Sigmoid colon (tissue), 7 donors: ENCODE measurements at regions of chr2 and their contacts with region 1.

Region 1: DNA sequence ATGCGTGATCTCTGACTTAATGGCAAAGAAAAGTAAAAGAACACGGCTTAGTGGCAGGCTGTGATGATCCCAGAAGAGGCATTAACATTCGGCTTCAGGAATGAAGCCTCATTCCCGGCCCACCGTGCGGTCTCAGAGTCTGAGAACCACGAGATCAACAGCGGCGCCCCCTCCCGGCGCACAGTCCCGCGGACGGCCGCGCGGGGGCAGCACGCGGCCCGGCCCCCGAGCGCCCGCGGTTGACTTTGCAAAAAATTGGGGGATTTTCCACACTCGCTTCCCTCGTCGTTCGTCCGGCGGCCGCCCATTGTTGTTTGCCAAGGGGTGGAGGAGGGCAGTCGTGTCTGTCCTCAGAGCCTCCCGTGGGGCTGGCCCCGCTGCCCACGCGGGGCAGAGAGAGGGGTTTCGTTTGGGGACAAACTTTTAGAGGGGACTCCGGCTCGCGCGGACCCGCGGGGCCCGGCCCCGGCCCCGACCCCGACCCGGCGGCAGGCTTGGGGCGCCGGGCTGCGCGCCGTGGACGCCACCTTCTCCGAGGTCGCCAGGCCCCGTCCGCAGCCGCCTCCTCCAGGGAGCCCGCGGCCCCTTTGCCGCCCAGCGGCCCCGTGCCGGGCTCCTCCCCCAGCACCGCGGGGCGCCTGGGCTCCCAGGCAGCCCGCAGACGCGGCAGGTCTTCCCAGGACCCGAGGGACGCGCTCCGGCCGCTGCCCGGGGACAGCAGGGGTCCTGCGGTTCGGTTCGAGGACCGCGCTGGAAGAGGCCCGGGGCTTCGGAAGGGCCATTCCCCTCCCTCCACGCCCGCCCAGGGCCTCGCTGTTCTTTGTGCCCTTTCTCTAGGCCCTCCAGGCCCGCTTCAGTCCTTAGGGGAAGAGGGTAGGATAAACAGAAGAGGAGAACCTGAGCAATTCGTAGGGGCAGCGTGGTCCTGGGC is 3.4 kb upstream of the HS6ST1 start:
- DNase-seq: peak; percentile 93
- H3K4me3 ChIP-seq: peak overlapping the region; percentile 34 to 81 (median 54)
- H3K27ac ChIP-seq: peak overlapping the region; percentile 56 to 89 (median 83)
- H3K4me1 ChIP-seq: peaks cover 0 to 52% (median 38%) of the 10 kb centered on the region in 4 donors
- H3K27me3 ChIP-seq: no peaks in the 10 kb centered on the region
- CTCF ChIP-seq: peak in 3 of 4 experiments; percentile 6 to 95 (median 52)
- EP300 ChIP-seq: no peak
- POLR2A ChIP-seq: no peak

Region 2: DNA sequence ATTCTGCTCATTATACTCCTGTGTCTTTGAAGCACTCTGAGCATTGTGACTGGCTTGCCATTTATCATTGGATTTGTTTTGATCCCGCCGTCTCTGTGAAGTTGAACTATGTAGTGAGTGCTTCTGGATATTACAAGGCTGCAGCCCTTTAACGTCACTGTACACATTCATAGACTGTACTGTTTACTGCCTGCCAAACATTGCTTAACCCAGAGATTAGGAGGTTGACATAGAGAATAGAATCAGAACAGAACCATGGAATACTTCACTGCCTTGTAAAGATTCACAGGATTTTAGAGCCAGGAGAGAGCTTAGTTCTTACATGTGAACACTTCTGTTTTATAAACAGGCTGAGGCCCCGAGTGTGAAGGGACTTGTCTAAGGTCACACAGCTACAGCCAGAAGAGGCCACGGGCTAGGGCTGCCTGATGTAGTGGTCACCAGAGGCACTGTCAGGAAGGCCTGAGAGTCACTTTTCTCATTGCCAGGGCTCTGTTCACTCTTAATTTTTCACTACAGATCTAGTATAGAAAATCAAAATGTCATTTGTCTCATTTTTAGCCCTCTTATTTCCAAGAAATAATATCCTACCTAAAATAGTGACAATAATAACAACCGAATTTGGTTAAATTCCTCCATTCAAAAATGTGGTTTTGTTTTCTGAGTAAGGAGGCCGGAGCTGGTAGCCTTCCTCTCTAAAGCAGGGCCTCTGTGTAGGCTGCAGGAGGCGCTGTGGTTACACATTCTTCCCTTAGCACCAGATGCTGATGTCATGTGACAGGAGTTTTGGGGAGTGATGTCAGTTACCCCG is 143.2 kb before region 1 on chr2:
- intact Hi-C with region 1: loop called (anchors 5 kb)
- DNase-seq: peak; percentile 80
- H3K4me3 ChIP-seq: no peak overlapping the region
- H3K27ac ChIP-seq: peak overlapping the region in 3 of 4 donors; percentile 76 to 84 (median 81)
- H3K4me1 ChIP-seq: peaks cover 0 to 36% (median 21%) of the 10 kb centered on the region in 4 donors
- H3K27me3 ChIP-seq: no peaks in the 10 kb centered on the region
- CTCF ChIP-seq: peak; percentile 40 to 88 (median 73)
- EP300 ChIP-seq: peak; percentile 74 to 97 (median 90)
- POLR2A ChIP-seq: no peak

Region 3: DNA sequence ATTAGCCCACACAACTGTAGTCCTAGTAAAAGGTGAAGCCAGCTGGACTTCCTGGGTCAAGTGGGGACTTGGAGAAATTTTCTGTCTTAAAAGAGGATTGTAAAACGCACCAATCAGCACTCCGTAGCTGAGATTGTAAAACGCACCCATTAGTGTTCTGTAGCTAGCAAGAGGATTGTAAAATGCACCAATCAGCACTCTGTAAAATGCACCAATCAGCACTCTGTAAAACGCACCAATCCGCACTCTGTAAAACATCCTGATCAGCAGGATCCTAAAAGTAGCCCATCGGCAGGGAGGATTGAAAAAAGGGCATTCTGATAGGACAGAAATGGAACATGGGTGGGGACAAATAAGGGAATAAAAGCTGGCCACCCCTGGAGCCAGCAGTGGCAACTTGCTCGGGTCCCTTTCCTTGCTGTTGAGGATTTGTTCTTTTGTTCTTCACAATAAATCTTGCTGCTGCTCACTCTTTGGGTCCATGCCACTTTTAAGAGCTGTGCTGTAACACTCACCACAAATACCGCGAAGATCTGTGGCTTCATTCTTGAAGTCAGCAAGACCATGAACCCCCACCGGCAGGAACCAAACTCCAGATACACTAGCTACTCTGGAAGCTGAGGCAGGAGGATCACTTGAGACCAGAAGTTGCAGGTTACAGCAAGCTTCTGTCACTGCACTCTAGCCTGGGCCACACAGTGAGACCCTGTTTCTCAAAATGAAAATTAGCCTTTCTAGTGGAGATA is 106.0 kb before region 1 on chr2:
- intact Hi-C with region 1: no loop called
- DNase-seq: no peak
- H3K4me3 ChIP-seq: no peak overlapping the region
- H3K27ac ChIP-seq: no peak overlapping the region
- H3K4me1 ChIP-seq: no peaks in the 10 kb centered on the region
- H3K27me3 ChIP-seq: no peaks in the 10 kb centered on the region
- CTCF ChIP-seq: no peak
- EP300 ChIP-seq: no peak
- POLR2A ChIP-seq: no peak

Region 4: DNA sequence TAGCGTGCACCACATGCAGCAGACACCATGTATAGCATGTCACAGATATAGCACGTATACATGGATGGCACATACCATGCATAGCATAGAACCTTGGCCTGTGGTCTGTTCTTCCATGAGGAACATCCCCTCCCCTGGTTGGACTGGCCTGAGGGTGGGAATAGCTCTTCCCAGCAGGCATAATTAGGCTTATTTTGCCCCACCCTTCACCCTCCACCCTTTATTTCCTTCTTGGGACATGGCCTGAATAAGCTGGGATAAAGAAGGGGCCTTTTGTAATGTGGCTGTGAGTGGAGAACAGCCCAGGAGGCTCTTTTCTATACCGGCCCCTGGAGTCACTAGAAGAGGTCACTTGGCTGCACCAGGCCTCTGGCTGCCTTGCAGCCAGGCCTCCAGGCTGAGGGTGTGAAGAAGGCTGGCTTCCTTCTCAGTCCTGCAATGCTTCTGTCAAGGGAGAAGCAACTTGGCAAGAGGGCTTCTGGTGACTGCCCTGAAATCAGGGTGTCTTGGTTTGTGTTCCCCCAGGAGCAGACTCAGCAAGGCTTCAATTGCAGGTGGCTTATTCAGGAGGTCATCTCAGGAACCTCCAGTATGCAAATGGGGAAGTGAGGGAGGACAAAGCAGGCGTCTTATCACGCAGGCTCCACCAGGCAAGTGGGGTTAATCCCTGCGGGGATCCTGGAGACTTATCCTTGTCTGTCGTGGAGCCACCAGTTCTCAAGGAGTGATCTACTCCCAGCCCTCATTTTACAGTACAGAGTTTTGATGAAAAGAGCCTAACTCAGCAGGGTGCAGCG is 71.6 kb before region 1 on chr2:
- intact Hi-C with region 1: no loop called
- DNase-seq: no peak
- H3K4me3 ChIP-seq: no peak overlapping the region
- H3K27ac ChIP-seq: no peak overlapping the region
- H3K4me1 ChIP-seq: no peaks in the 10 kb centered on the region
- H3K27me3 ChIP-seq: no peaks in the 10 kb centered on the region
- CTCF ChIP-seq: no peak
- EP300 ChIP-seq: no peak
- POLR2A ChIP-seq: no peak

Region 5: GRCh38 chr2:128374001-128374710 is 52.1 kb after region 1 on chr2:
- intact Hi-C with region 1: loop called (anchors 2 kb)
- DNase-seq: no peak
- H3K4me3 ChIP-seq: no peak overlapping the region
- H3K27ac ChIP-seq: peak overlapping the region; percentile 73 to 81 (median 77)
- H3K4me1 ChIP-seq: peaks cover 0 to 71% (median 67%) of the 10 kb centered on the region in 4 donors
- H3K27me3 ChIP-seq: no peaks in the 10 kb centered on the region
- CTCF ChIP-seq: no peak
- EP300 ChIP-seq: peak in 1 of 4 donors; percentile 18
- POLR2A ChIP-seq: no peak

Region 6: GRCh38 chr2:128466376-128466775 is 144.3 kb after region 1 on chr2:
- intact Hi-C with region 1: loop called (anchors 2 kb)
- DNase-seq: peak; percentile 90
- H3K4me3 ChIP-seq: no peak overlapping the region
- H3K27ac ChIP-seq: peak overlapping the region in 2 of 4 donors; percentile 10 to 49
- H3K4me1 ChIP-seq: peaks cover 0 to 18% (median 7%) of the 10 kb centered on the region in 4 donors
- H3K27me3 ChIP-seq: no peaks in the 10 kb centered on the region
- CTCF ChIP-seq: peak in 2 of 4 experiments; percentile 15 to 20
- EP300 ChIP-seq: no peak
- POLR2A ChIP-seq: no peak

Region 7: GRCh38 chr2:129877289-129877779 is 1555.3 kb after region 1 on chr2:
- intact Hi-C with region 1: loop called (anchors 10 kb)
- DNase-seq: peak; percentile 96
- H3K4me3 ChIP-seq: peak overlapping the region; percentile 69 to 77 (median 71)
- H3K27ac ChIP-seq: peak overlapping the region; percentile 82 to 91 (median 85)
- H3K4me1 ChIP-seq: peaks cover 0 to 16% (median 10%) of the 10 kb centered on the region in 4 donors
- H3K27me3 ChIP-seq: no peaks in the 10 kb centered on the region
- CTCF ChIP-seq: no peak
- EP300 ChIP-seq: no peak
- POLR2A ChIP-seq: no peak